CD14-positive monocyte (primary cell): ENCODE measurements at regions of chr4 and their contacts with region 1.

Region 1: GRCh38 chr4:168475745-168476144 is 4.5 kb downstream of the DDX60L start:
- DNase-seq: peak in 1 of 3 donors; percentile 29
- H3K4me3 ChIP-seq: no peak overlapping the region
- H3K4me3 Mint-ChIP-seq: no peak overlapping the region
- H3K27ac ChIP-seq: no peak overlapping the region
- H3K27ac Mint-ChIP-seq: peak overlapping the region in 5 of 7 donors; percentile 58 to 85 (median 84)
- H3K4me1 ChIP-seq: peaks cover 37 to 47% of the 10 kb centered on the region in 2 donors
- H3K4me1 Mint-ChIP-seq: peaks cover 56% of the 10 kb centered on the region
- H3K27me3 ChIP-seq: no peaks in the 10 kb centered on the region
- H3K27me3 Mint-ChIP-seq: no peaks in the 10 kb centered on the region
- CTCF ChIP-seq: no peak

Region 2: GRCh38 chr4:168092176-168092712 is 383.5 kb before region 1 on chr4 and contains the start of gene ANXA10:
- intact Hi-C with region 1: no loop called
- DNase-seq: no peak
- H3K4me3 ChIP-seq: no peak within 1 kb of the TSS
- H3K4me3 Mint-ChIP-seq: no peak within 1 kb of the TSS
- H3K27ac ChIP-seq: no peak within 1 kb of the TSS
- H3K27ac Mint-ChIP-seq: no peak within 1 kb of the TSS
- H3K4me1 ChIP-seq: no peaks in the 10 kb centered on the region
- H3K4me1 Mint-ChIP-seq: no peaks in the 10 kb centered on the region
- H3K27me3 ChIP-seq: no peaks in the 10 kb centered on the region
- H3K27me3 Mint-ChIP-seq: no peaks in the 10 kb centered on the region
- CTCF ChIP-seq: no peak
- polyA plus RNA-seq, gene ANXA10: not detected

Region 3: DNA sequence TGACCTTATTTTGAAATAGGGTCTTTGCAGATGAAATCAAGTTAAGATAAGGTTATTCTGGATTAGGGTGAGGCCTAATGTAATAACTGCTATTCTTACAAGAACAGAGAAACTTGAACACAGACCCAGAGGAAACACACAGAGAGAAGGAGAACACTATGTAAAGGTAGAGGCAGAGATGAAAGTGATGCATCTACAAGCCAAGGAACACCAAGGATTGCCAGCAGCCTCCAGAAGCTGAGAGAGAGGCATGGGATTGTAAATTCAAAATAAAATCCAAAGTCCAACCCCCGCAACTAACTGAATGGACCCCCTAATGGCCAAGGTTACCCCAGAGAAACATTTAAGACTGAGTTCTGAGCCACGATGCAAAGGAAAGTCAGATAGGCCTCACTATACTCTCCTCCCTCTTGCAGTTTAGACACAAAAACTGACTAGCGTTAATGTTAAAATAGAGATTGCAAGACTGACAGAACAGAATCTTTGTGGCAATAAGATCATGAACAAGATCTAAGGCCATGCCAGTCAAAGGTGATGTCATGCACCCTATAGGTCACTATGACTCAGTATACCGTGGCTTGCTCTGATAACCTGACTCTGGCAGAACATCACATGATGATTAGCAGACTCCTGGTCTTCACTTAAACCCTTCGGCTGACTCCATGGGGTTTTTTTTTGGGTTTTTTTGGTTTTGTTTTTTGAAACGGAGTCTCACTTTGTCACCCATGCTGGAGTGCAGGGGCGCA is 38.4 kb before region 1 on chr4:
- intact Hi-C with region 1: loop called in 1 of 2 experiments (anchors 5 kb)
- DNase-seq: peak in 1 of 3 donors; percentile 58
- H3K4me3 ChIP-seq: no peak overlapping the region
- H3K4me3 Mint-ChIP-seq: no peak overlapping the region
- H3K27ac ChIP-seq: no peak overlapping the region
- H3K27ac Mint-ChIP-seq: peak overlapping the region in 1 of 7 donors; percentile 89
- H3K4me1 ChIP-seq: peaks cover 0 to 3% of the 10 kb centered on the region in 2 donors
- H3K4me1 Mint-ChIP-seq: peaks cover 15% of the 10 kb centered on the region
- H3K27me3 ChIP-seq: no peaks in the 10 kb centered on the region
- H3K27me3 Mint-ChIP-seq: peaks cover 0 to 2% (median 0%) of the 10 kb centered on the region in 3 donors
- CTCF ChIP-seq: no peak